MCF 10A (cell line): ENCODE measurements at regions of chr20 and their contacts with region 1.

Region 1: DNA sequence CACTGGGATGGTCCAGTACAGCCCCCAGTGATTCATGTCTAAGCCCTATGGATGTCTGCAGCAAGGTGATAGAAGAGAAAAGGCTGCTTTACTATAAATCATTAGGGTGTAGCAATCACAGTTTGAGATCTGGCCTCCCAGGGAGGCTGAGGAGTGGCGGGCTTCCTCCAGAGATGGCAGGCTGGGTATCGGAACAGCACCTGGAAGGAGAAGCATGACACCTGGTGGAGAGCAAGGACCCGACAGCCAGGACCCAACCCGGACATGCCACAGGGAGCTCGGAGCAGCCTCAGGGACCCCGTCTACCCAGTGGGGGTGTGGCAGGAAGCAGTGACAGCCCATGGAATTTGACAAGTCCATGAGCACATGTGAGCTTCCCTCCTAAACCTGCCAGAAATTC is 114.8 kb upstream of the CD93 start:
- DNase-seq: peak; percentile 79
- H3K4me3 Mint-ChIP-seq: no peak overlapping the region
- H3K27ac Mint-ChIP-seq: no peak overlapping the region
- H3K4me1 Mint-ChIP-seq: peaks cover 16% of the 10 kb centered on the region
- H3K27me3 Mint-ChIP-seq: no peaks in the 10 kb centered on the region
- CTCF ChIP-seq: peak; percentile 71

Region 2: GRCh38 chr20:22700367-22700766 is 500.6 kb before region 1 on chr20:
- CTCF ChIA-PET with region 1: interaction called, 198 read pairs
- POLR2A ChIA-PET with region 1: no interaction called
- intact Hi-C with region 1: no loop called
- DNase-seq: peak; percentile 57
- H3K4me3 Mint-ChIP-seq: no peak overlapping the region
- H3K27ac Mint-ChIP-seq: no peak overlapping the region
- H3K4me1 Mint-ChIP-seq: peaks cover 20% of the 10 kb centered on the region
- H3K27me3 Mint-ChIP-seq: no peaks in the 10 kb centered on the region
- CTCF ChIP-seq: no peak

Region 3: GRCh38 chr20:22746957-22747356 is 454.0 kb before region 1 on chr20:
- CTCF ChIA-PET with region 1: no interaction called
- POLR2A ChIA-PET with region 1: no interaction called
- intact Hi-C with region 1: no loop called
- DNase-seq: no peak
- H3K4me3 Mint-ChIP-seq: no peak overlapping the region
- H3K27ac Mint-ChIP-seq: no peak overlapping the region
- H3K4me1 Mint-ChIP-seq: peaks cover 5% of the 10 kb centered on the region
- H3K27me3 Mint-ChIP-seq: no peaks in the 10 kb centered on the region
- CTCF ChIP-seq: no peak

Region 4: GRCh38 chr20:23094927-23095326 is 106.0 kb before region 1 on chr20:
- CTCF ChIA-PET with region 1: interaction called, 32 read pairs
- POLR2A ChIA-PET with region 1: interaction called, 3 read pairs
- intact Hi-C with region 1: no loop called
- DNase-seq: peak; percentile 92
- H3K4me3 Mint-ChIP-seq: peak overlapping the region; percentile 53
- H3K27ac Mint-ChIP-seq: peak overlapping the region; percentile 84
- H3K4me1 Mint-ChIP-seq: peaks cover 38% of the 10 kb centered on the region
- H3K27me3 Mint-ChIP-seq: no peaks in the 10 kb centered on the region
- CTCF ChIP-seq: no peak

Region 5: GRCh38 chr20:23143098-23143497 is 57.8 kb before region 1 on chr20:
- CTCF ChIA-PET with region 1: interaction called, 12 read pairs
- POLR2A ChIA-PET with region 1: interaction called, 4 read pairs
- intact Hi-C with region 1: no loop called
- DNase-seq: peak; percentile 89
- H3K4me3 Mint-ChIP-seq: no peak overlapping the region
- H3K27ac Mint-ChIP-seq: peak overlapping the region; percentile 82
- H3K4me1 Mint-ChIP-seq: peaks cover 65% of the 10 kb centered on the region
- H3K27me3 Mint-ChIP-seq: no peaks in the 10 kb centered on the region
- CTCF ChIP-seq: no peak

Region 6: DNA sequence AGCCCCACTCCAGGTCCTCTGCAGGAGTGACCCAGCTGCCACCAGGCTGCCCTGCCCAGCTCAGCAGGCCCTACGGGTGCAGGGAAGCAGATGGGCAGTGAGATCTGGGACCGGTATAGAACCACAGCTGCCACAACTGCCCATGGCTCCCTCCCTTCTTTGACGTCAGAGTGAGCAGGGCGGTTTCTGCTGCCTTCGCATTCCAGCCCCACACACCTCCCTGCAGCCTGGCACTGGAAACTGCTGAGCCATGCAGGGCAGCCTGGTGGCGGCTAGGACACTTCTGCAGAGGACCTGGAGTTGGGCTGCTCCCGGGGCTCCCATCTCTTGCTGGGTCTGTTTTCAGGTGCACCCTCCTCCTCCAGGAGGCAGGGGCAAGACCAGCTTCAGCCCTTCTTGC is 13.2 kb before region 1 on chr20:
- CTCF ChIA-PET with region 1: interaction called, 18 read pairs
- POLR2A ChIA-PET with region 1: interaction called, 3 read pairs
- intact Hi-C with region 1: no loop called
- DNase-seq: peak; percentile 64
- H3K4me3 Mint-ChIP-seq: no peak overlapping the region
- H3K27ac Mint-ChIP-seq: no peak overlapping the region
- H3K4me1 Mint-ChIP-seq: peaks cover 6% of the 10 kb centered on the region
- H3K27me3 Mint-ChIP-seq: no peaks in the 10 kb centered on the region
- CTCF ChIP-seq: no peak

Region 7: DNA sequence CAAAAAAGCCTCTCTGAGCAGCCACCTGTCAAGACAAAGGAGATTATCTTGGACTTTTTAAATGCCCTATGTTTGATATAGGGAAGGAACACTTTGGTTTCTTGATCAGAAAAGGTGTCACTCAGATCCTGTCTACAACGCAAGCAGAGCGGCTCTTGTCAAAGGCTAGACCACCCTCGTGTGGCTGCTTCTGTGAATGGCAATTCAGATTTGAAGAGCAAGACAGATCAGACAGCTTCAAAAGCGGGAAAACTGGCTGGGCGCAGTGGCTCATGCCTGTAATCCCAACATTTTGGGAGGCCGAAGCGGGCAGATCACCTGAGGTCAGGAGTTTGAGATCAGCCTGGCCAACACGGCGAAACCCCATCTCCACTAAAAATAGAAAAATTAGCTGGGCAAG is 139.6 kb after region 1 on chr20:
- CTCF ChIA-PET with region 1: interaction called, 4 read pairs
- POLR2A ChIA-PET with region 1: no interaction called
- intact Hi-C with region 1: loop called (anchors 1 kb)
- DNase-seq: peak; percentile 61
- H3K4me3 Mint-ChIP-seq: no peak overlapping the region
- H3K27ac Mint-ChIP-seq: no peak overlapping the region
- H3K4me1 Mint-ChIP-seq: no peaks in the 10 kb centered on the region
- H3K27me3 Mint-ChIP-seq: no peaks in the 10 kb centered on the region
- CTCF ChIP-seq: peak; percentile 62